ENCODE measurements at regions of chr5 and their contacts with region 1.

Region 1: GRCh38 chr5:52948418-52949076 is 40.6 kb upstream of the ITGA2 start:
- DNase-seq: peak; percentile 84
- ATAC-seq: peak; percentile 99
- H3K4me3 Mint-ChIP-seq: no peak overlapping the region
- H3K27ac Mint-ChIP-seq: peak overlapping the region; percentile 74
- H3K4me1 Mint-ChIP-seq: peaks cover 35% of the 10 kb centered on the region
- H3K27me3 Mint-ChIP-seq: no peaks in the 10 kb centered on the region

Region 2: GRCh38 chr5:52997424-52997823 is 48.9 kb after region 1 on chr5:
- CTCF ChIA-PET with region 1: interaction called, 11 read pairs
- DNase-seq: no peak
- ATAC-seq: no peak
- H3K4me3 Mint-ChIP-seq: no peak overlapping the region
- H3K27ac Mint-ChIP-seq: no peak overlapping the region
- H3K4me1 Mint-ChIP-seq: peaks cover 47% of the 10 kb centered on the region
- H3K27me3 Mint-ChIP-seq: peaks cover 2% of the 10 kb centered on the region

Region 3: GRCh38 chr5:53069626-53070025 is 121.1 kb after region 1 on chr5:
- CTCF ChIA-PET with region 1: interaction called, 18 read pairs
- DNase-seq: peak; percentile 90
- ATAC-seq: peak; percentile 96
- H3K4me3 Mint-ChIP-seq: peak overlapping the region; percentile 25
- H3K27ac Mint-ChIP-seq: peak overlapping the region; percentile 83
- H3K4me1 Mint-ChIP-seq: peaks cover 36% of the 10 kb centered on the region
- H3K27me3 Mint-ChIP-seq: no peaks in the 10 kb centered on the region

Region 4: DNA sequence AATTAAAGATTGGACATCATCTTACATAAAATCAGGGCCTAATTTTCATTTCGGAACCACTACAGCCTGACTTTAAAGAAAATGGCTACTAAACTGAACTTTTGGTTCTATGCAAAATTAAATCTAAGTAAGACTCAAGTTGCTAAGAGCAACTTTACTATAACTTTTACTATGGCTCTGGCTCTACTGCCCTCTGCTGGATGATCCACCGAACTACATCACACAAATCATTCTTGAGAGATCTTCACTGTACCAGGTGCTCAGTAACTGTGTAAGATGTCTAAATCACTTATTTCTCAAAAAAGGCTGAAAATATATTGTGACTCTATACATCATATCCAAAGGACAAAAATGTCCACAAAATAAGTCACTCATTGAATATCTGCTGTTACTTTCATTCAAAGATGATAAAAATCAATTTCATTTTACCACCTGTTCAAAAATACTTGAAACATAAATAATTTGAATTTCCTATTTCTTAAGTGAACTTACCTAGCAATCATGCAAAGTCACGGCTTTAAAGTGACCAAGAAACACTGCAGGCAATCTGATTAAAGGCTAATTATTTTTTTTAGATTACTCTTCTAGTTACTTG is 147.5 kb after region 1 on chr5:
- CTCF ChIA-PET with region 1: interaction called, 79 read pairs
- DNase-seq: peak; percentile 84
- ATAC-seq: peak; percentile 88
- H3K4me3 Mint-ChIP-seq: no peak overlapping the region
- H3K27ac Mint-ChIP-seq: peak overlapping the region; percentile 43
- H3K4me1 Mint-ChIP-seq: peaks cover 17% of the 10 kb centered on the region
- H3K27me3 Mint-ChIP-seq: no peaks in the 10 kb centered on the region

Region 5: DNA sequence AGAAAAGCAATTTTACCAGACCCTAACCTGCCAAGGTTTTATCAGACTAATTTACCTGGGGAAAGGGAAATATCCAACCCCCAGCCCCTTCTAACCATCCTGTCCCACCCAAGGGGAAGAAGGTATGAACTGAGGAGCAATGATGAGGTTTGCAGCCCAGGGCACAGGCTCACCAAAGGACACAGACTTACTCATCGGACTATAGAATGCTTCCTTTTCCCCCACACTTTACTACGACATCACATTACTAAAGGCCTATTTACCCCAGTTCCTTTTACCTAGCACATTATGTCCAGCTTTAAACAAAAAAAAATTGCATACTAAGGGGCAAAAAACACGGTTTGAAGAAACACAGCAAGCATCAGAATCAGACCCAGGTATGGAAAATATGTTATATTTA is 437.8 kb after region 1 on chr5:
- CTCF ChIA-PET with region 1: no interaction called
- DNase-seq: no peak
- ATAC-seq: no peak
- H3K4me3 Mint-ChIP-seq: no peak overlapping the region
- H3K27ac Mint-ChIP-seq: no peak overlapping the region
- H3K4me1 Mint-ChIP-seq: no peaks in the 10 kb centered on the region
- H3K27me3 Mint-ChIP-seq: peaks cover 3% of the 10 kb centered on the region

Measured in activated CD8-positive, alpha-beta memory T cell treated with anti-CD3 and anti-CD28 coated beads, Interleukin-2, amount 10 ng/mL, durations not matched to agents 7 days and 5 days (primary cell).